ENCODE measurements at regions of chr1 and their contacts with region 1.

Region 1: GRCh38 chr1:44721485-44722361 is 9.2 kb downstream of the RNU5D-1 start:
- DNase-seq: peak; percentile 75
- H3K4me3 Mint-ChIP-seq: peak overlapping the region; percentile 77
- H3K27ac Mint-ChIP-seq: peak overlapping the region; percentile 97
- H3K4me1 Mint-ChIP-seq: peaks cover 71% of the 10 kb centered on the region
- H3K27me3 Mint-ChIP-seq: no peaks in the 10 kb centered on the region

Region 2: GRCh38 chr1:44681905-44682882 is 39.5 kb before region 1 on chr1:
- intact Hi-C with region 1: no loop called
- DNase-seq: no peak
- H3K4me3 Mint-ChIP-seq: no peak overlapping the region
- H3K27ac Mint-ChIP-seq: no peak overlapping the region
- H3K4me1 Mint-ChIP-seq: peaks cover 9% of the 10 kb centered on the region
- H3K27me3 Mint-ChIP-seq: no peaks in the 10 kb centered on the region

Region 3: GRCh38 chr1:44707959-44708831 is 13.5 kb before region 1 on chr1:
- intact Hi-C with region 1: loop called (anchors 1 kb)
- DNase-seq: no peak
- H3K4me3 Mint-ChIP-seq: peak overlapping the region; percentile 55
- H3K27ac Mint-ChIP-seq: peak overlapping the region; percentile 27
- H3K4me1 Mint-ChIP-seq: peaks cover 15% of the 10 kb centered on the region
- H3K27me3 Mint-ChIP-seq: peaks cover 10% of the 10 kb centered on the region

Region 4: GRCh38 chr1:44870096-44870495 is 148.4 kb after region 1 on chr1:
- intact Hi-C with region 1: no loop called
- DNase-seq: no peak
- H3K4me3 Mint-ChIP-seq: no peak overlapping the region
- H3K27ac Mint-ChIP-seq: no peak overlapping the region
- H3K4me1 Mint-ChIP-seq: no peaks in the 10 kb centered on the region
- H3K27me3 Mint-ChIP-seq: no peaks in the 10 kb centered on the region

Measured in activated T-helper 1 cell treated with anti-CD3 and anti-CD28 coated beads, Interleukin-12 subunit alpha, Interleukin-12 subunit beta, Interleukin-2, Interleukin-4 antibody, amounts not matched to agents 30 ng/mL and 10 ng/mL and 1 ng/mL, durations not matched to agents 14 hours and 24 hours and 36 hours (primary cell).